Endothelial cell of umbilical vein (primary cell): ENCODE measurements at regions of chr6 and their contacts with region 1.

Region 1: GRCh38 chr6:31862344-31863227 is at the start of gene NEU1:
- DNase-seq: peak; percentile 100
- H3K4me3 ChIP-seq: peak within 1 kb of the TSS; percentile 71 to 88 (median 83)
- H3K27ac ChIP-seq: peak within 1 kb of the TSS; percentile 77
- H3K4me1 ChIP-seq: peaks cover 7% of the 10 kb centered on the region
- H3K27me3 ChIP-seq: no peaks in the 10 kb centered on the region
- CTCF ChIP-seq: no peak
- POLR2A ChIP-seq: peak; percentile 99
- total RNA-seq, gene NEU1: 61.3 and 62.8 TPM in 2 replicates

Region 2: GRCh38 chr6:31665501-31666336 is 196.9 kb before region 1 on chr6 and contains the start of gene CSNK2B:
- CTCF ChIA-PET with region 1: no interaction called
- POLR2A ChIA-PET with region 1: no interaction called
- dilution Hi-C with region 1: no loop called
- intact Hi-C with region 1: loop called (anchors 1 kb)
- DNase-seq: peak; percentile 97
- H3K4me3 ChIP-seq: peak within 1 kb of the TSS; percentile 70 to 94 (median 72)
- H3K27ac ChIP-seq: peak within 1 kb of the TSS; percentile 77
- H3K4me1 ChIP-seq: peaks cover 28% of the 10 kb centered on the region
- H3K27me3 ChIP-seq: no peaks in the 10 kb centered on the region
- CTCF ChIP-seq: peak in 1 of 2 donors; percentile 13
- POLR2A ChIP-seq: peak; percentile 54
- total RNA-seq, gene CSNK2B: 206 and 214 TPM in 2 replicates

Region 3: GRCh38 chr6:31901953-31902643 is 39.5 kb after region 1 on chr6 and contains the start of gene ZBTB12:
- CTCF ChIA-PET with region 1: interaction called, 4 read pairs
- POLR2A ChIA-PET with region 1: interaction called, 7 read pairs
- dilution Hi-C with region 1: no loop called
- intact Hi-C with region 1: loop called (anchors 1 kb)
- DNase-seq: peak; percentile 95
- H3K4me3 ChIP-seq: peak within 1 kb of the TSS; percentile 18 to 77 (median 45)
- H3K27ac ChIP-seq: no peak within 1 kb of the TSS
- H3K4me1 ChIP-seq: peaks cover 9% of the 10 kb centered on the region
- H3K27me3 ChIP-seq: peaks cover 5 to 12% of the 10 kb centered on the region in 2 experiments
- CTCF ChIP-seq: no peak
- POLR2A ChIP-seq: peak; percentile 56
- total RNA-seq, gene ZBTB12: 3.5 and 4.9 TPM in 2 replicates